CD8-positive, alpha-beta T cell (primary cell): ENCODE measurements at regions of chrX and their contacts with region 1.

Region 1: DNA sequence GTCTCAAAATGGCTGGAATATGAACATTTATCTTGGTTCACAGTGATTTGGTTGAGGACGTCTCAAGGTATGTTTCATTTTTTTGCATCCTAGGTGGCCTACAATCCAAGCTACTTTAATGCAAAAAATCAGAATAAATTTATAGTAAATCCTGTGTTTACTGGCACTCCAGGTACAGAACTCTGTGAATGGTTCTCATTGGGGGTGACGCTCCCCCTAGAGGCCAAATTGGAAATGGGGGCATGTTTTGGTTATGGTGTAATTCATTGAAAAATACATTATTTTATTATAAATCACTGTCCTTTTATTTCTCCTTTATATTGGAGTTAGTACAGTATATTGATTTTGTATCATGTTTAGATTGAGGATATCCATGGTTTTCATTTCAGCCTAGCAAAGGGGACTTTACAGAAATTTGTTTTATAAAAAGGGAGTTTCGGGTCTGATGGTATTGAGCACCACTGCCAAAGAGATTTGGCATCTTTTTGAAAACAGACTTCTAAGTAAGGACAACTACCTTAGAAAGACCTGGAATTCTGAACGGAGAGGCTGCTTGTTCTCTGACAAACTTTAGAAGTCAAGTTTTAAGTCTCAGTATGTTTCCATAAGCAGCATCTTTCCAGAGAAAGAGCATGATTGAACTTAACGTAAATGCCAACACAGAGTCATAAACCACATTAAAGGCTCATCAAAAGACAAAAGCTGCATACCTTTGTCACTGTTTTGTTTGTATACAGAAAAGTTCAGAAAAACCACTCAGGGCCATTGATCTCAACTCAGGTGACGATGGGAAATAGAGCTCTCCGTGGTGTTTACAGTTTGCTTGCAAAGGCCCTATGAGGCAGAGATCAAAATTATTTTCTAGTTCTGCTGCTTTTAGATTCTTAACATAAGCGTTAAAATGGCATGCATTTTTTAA is 19.4 kb downstream of the MTM1 start:
- DNase-seq: peak; percentile 11 to 67 (median 58)
- ATAC-seq: peak; percentile 56
- H3K4me3 ChIP-seq: no peak overlapping the region
- H3K4me3 Mint-ChIP-seq: no peak overlapping the region
- H3K27ac ChIP-seq: no peak overlapping the region
- H3K27ac Mint-ChIP-seq: no peak overlapping the region
- H3K4me1 ChIP-seq: no peaks in the 10 kb centered on the region
- H3K4me1 Mint-ChIP-seq: peaks cover 19% of the 10 kb centered on the region
- H3K27me3 ChIP-seq: no peaks in the 10 kb centered on the region
- H3K27me3 Mint-ChIP-seq: no peaks in the 10 kb centered on the region
- CTCF ChIP-seq: peak; percentile 83

Region 2: GRCh38 chrX:149962859-149963757 is 624.7 kb before region 1 on chrX:
- CTCF ChIA-PET with region 1: no interaction called
- POLR2A ChIA-PET with region 1: no interaction called
- intact Hi-C with region 1: loop called in 1 of 2 experiments (anchors 5 kb)
- DNase-seq: peak in 4 of 9 experiments; percentile 7 to 38 (median 17)
- ATAC-seq: peak; percentile 42
- H3K4me3 ChIP-seq: no peak overlapping the region
- H3K4me3 Mint-ChIP-seq: no peak overlapping the region
- H3K27ac ChIP-seq: no peak overlapping the region
- H3K27ac Mint-ChIP-seq: no peak overlapping the region
- H3K4me1 ChIP-seq: no peaks in the 10 kb centered on the region
- H3K4me1 Mint-ChIP-seq: no peaks in the 10 kb centered on the region
- H3K27me3 ChIP-seq: no peaks in the 10 kb centered on the region
- H3K27me3 Mint-ChIP-seq: no peaks in the 10 kb centered on the region
- CTCF ChIP-seq: no peak

Region 3: DNA sequence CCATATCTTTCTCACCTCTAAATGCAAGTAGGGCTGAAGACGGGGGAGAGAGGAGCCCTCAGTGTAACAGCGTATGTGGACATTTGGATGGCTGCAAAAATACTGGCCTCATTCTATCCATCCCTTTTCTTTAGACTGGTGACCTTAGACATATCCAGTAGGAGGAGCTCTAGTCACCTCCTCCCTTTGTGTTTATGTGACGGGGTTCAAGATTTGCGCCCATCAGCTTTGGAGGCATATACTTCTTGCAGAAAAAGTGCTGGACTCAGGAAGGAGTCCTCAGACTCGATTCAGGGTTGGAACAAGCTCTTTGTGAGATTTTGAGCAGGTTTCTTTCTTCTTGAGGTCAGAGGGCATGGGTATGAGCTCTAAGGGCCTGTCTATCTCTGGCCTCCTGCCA is 138.5 kb before region 1 on chrX:
- CTCF ChIA-PET with region 1: interaction called, 6 read pairs
- POLR2A ChIA-PET with region 1: no interaction called
- intact Hi-C with region 1: loop called in 1 of 2 experiments (anchors 5 kb)
- DNase-seq: no peak
- ATAC-seq: no peak
- H3K4me3 ChIP-seq: no peak overlapping the region
- H3K4me3 Mint-ChIP-seq: no peak overlapping the region
- H3K27ac ChIP-seq: no peak overlapping the region
- H3K27ac Mint-ChIP-seq: no peak overlapping the region
- H3K4me1 ChIP-seq: peaks cover 3% of the 10 kb centered on the region
- H3K4me1 Mint-ChIP-seq: no peaks in the 10 kb centered on the region
- H3K27me3 ChIP-seq: no peaks in the 10 kb centered on the region
- H3K27me3 Mint-ChIP-seq: no peaks in the 10 kb centered on the region
- CTCF ChIP-seq: no peak

Region 4: DNA sequence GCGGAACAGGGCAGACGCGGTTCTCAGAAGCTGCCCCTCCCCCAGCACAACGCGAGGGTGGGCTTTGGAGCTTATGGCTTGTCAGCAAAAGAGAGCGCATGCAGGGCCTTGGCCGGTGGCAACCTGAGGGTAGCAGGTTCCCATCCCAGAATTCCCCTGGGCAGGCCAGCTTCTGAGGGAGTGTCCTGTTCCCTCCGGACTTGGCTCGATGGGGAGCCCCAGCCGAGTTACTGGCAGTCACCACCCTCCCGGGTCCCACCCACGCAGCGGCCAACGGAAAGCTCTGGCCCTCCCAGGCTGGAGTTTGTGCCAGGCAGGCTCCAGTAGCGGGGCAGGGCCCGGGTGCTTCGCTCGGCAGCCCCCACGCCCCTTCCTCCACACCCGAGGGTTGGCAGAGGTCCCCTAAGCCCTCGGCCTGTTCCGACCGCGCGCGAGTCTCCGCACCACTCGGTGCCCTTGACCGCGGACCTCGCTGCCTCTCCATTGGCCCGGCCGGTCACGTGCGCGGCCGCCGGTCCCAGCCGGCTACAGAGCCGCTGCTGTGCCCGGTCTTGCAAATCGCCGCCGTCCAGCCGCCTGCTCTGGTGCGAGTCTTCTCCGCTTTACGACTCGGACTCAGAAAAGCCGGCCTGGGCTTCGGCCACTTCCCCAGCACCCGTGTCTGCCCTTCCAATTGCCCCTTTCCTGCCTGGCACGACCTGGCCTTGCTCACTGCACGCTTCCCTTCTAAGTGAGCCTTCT is 40.3 kb before region 1 on chrX:
- CTCF ChIA-PET with region 1: interaction called, 7 read pairs
- POLR2A ChIA-PET with region 1: no interaction called
- intact Hi-C with region 1: loop called in 1 of 2 experiments (anchors 5 kb)
- DNase-seq: peak in 2 of 9 experiments; percentile 25 to 29
- ATAC-seq: no peak
- H3K4me3 ChIP-seq: peak overlapping the region; percentile 28 to 33
- H3K4me3 Mint-ChIP-seq: peak overlapping the region; percentile 81
- H3K27ac ChIP-seq: no peak overlapping the region
- H3K27ac Mint-ChIP-seq: no peak overlapping the region
- H3K4me1 ChIP-seq: peaks cover 26% of the 10 kb centered on the region
- H3K4me1 Mint-ChIP-seq: peaks cover 18% of the 10 kb centered on the region
- H3K27me3 ChIP-seq: no peaks in the 10 kb centered on the region
- H3K27me3 Mint-ChIP-seq: no peaks in the 10 kb centered on the region
- CTCF ChIP-seq: no peak